Activated naive CD4-positive, alpha-beta T cell treated with anti-CD3 and anti-CD28 coated beads for 36 hours (primary cell): ENCODE measurements at regions of chr2 and their contacts with region 1.

Region 1: DNA sequence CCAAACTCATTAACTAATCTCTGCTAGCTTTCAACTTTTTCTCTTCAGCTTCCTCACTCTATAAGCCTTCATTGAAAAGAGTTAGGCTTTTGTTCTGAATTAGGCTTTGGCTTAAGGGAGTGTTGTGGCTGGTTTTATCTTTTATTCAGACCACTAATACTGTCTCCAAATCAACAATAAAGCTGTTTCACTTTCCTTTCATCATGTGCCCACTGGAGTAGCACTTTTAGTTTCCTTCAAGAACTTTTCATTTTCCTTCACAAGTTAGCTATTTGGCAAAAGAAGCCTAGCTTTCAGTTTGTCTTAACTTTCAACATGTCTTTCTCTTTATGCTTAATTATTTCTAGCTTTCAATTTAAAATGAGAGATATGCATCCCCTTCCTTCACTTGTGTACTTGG is 271.7 kb upstream of the FSIP2 start:
- DNase-seq: no peak
- H3K4me3 Mint-ChIP-seq: no peak overlapping the region
- H3K27ac Mint-ChIP-seq: no peak overlapping the region
- H3K4me1 Mint-ChIP-seq: no peaks in the 10 kb centered on the region
- H3K27me3 Mint-ChIP-seq: no peaks in the 10 kb centered on the region

Region 2: DNA sequence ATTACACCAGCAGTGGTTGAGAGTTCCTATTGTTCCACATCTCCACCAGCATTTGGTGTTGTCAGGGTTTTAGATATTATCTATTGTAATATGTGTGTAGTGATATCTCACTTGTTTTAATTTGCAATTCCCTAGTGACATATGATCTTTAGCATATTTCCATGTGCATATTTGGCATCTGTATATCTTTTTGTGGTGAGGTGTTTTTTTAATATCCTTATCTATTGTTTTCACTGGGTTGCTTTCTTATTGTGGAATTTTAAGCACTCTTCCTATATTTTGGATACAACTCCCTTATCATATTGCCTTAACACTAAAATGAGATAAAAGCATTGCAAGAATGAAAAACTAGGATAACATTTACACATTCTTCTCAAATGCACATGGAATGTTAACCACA is 182.2 kb before region 1 on chr2:
- CTCF ChIA-PET with region 1: no interaction called
- intact Hi-C with region 1: loop called (anchors 5 kb)
- DNase-seq: no peak
- H3K4me3 Mint-ChIP-seq: no peak overlapping the region
- H3K27ac Mint-ChIP-seq: no peak overlapping the region
- H3K4me1 Mint-ChIP-seq: no peaks in the 10 kb centered on the region
- H3K27me3 Mint-ChIP-seq: no peaks in the 10 kb centered on the region

Region 3: GRCh38 chr2:185404578-185404977 is 62.3 kb before region 1 on chr2:
- CTCF ChIA-PET with region 1: no interaction called
- intact Hi-C with region 1: no loop called
- DNase-seq: no peak
- H3K4me3 Mint-ChIP-seq: no peak overlapping the region
- H3K27ac Mint-ChIP-seq: no peak overlapping the region
- H3K4me1 Mint-ChIP-seq: no peaks in the 10 kb centered on the region
- H3K27me3 Mint-ChIP-seq: no peaks in the 10 kb centered on the region

Region 4: DNA sequence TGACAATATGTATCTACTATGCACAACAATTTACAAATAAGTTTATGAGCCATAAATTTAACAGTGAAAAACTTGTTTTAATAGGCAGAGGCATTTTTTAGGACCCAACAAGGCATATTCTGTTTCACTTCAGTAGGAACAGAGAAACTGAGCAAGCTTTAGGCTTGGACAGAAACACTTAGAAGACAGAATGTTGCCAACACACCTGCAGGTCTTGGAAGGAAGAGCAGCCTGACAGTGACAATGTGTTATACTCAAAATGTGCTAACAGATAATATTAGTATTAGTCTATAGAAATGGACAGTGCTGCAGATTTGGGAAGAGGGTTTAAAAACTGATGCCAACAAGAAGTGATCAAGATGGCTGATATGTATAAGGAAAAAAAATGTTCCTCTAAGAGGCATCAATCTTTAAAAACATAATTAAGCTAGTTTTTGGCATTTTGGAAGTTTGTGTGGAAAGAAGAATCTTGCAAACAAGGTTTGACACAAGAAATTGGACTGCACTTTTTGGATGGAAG is 25.4 kb before region 1 on chr2:
- CTCF ChIA-PET with region 1: no interaction called
- intact Hi-C with region 1: no loop called
- DNase-seq: no peak
- H3K4me3 Mint-ChIP-seq: no peak overlapping the region
- H3K27ac Mint-ChIP-seq: no peak overlapping the region
- H3K4me1 Mint-ChIP-seq: no peaks in the 10 kb centered on the region
- H3K27me3 Mint-ChIP-seq: no peaks in the 10 kb centered on the region